ENCODE measurements at regions of chr1 and their contacts with region 1.

Region 1: GRCh38 chr1:17250601-17251000 is 1.7 kb downstream of the PADI3 start:
- DNase-seq: peak; percentile 92
- ATAC-seq: peak; percentile 85
- H3K4me3 ChIP-seq: no peak overlapping the region
- H3K27ac ChIP-seq: peak overlapping the region; percentile 68
- H3K4me1 ChIP-seq: peaks cover 42% of the 10 kb centered on the region
- H3K27me3 ChIP-seq: no peaks in the 10 kb centered on the region
- CTCF ChIP-seq: no peak

Region 2: DNA sequence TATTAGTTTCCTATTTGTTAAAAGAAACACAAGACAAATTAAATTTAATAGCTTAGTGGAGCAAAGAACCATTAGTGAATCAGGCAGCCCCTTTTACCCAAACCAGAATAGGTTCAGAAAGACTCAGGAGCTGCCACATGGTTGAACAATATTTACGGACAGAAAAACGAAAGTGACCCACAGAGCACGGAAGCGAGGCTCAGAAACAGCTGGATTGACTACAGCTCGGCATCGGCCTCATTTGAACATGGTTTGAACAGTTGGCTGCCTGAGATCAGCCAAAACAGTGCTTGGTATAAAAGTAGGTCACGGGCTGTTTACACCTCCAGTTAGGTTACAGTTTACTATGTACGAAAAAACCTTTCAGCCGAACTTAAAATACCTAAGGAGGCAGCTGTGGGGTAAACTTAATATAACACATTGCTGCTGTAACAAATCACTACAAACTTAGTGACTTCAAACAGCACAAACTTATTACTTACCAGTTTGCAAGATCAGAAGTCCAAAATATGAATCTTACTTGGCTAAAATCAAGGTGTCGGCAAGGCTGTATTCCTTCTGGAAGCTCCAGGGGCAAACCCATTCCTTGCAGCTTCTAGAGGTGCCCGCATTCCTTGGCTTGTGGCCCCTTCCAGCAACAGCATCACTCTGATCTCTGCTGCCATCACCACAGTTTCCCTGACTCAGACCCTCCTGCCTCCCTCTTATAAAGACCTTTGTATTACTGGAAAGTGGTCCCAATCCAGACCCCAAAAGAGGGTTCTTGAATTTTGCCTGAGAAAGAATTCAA is 69.2 kb after region 1 on chr1:
- CTCF ChIA-PET with region 1: interaction called, 10 read pairs
- POLR2A ChIA-PET with region 1: no interaction called
- intact Hi-C with region 1: no loop called
- DNase-seq: no peak
- ATAC-seq: no peak
- H3K4me3 ChIP-seq: no peak overlapping the region
- H3K27ac ChIP-seq: no peak overlapping the region
- H3K4me1 ChIP-seq: no peaks in the 10 kb centered on the region
- H3K27me3 ChIP-seq: no peaks in the 10 kb centered on the region
- CTCF ChIP-seq: no peak

Measured in PC-3 (cell line).